Naive thymus-derived CD4-positive, alpha-beta T cell (primary cell): ENCODE measurements at regions of chr9 and their contacts with region 1.

Region 1: DNA sequence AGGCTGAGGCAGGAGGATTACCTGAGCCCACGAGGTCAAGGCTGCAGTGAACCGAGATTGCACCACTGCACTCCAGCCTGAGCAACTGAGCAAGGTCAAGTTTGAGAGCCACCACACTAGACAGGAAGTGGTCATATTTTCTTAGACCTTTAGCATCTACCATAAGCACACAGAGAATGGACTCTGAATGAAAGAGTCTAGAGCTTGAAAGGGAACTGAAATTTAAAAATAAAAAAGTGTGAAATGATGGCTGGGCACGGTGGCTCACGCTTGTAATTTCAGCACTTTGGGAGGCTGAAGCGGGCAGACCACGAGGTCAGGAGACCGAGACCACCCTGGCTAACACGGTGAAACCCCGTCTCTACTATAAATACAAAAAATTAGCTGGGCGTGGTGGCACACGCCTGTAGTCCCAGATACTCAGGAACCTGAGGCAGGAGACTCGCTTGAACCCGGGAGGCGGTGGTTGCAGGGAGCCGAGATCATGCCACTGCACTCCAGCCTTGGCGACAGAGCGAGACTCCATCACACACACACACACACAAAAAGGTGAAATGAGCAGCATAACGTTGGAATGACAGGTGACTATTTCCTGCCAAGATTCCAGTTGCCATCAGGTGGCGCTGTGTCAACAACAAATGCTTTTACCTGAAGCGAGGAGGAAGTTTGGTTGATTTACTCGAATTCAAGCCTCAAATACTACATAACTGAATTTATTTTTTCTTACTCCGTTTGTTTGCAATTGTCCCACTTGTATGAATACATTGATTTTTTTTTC is 21.3 kb upstream of the AK3 start:
- DNase-seq: peak; percentile 56 to 83 (median 76)
- ATAC-seq: peak; percentile 79
- H3K4me3 ChIP-seq: no peak overlapping the region
- H3K4me3 Mint-ChIP-seq: peak overlapping the region; percentile 39 to 79 (median 64)
- H3K27ac ChIP-seq: no peak overlapping the region
- H3K27ac Mint-ChIP-seq: peak overlapping the region in 5 of 9 donors; percentile 29 to 83 (median 51)
- H3K4me1 ChIP-seq: peaks cover 0 to 3% of the 10 kb centered on the region in 2 donors
- H3K4me1 Mint-ChIP-seq: peaks cover 0 to 20% (median 10%) of the 10 kb centered on the region in 7 donors
- H3K27me3 ChIP-seq: no peaks in the 10 kb centered on the region
- H3K27me3 Mint-ChIP-seq: peaks cover 0 to 11% (median 7%) of the 10 kb centered on the region in 5 donors

Region 2: GRCh38 chr9:4832786-4833579 is 70.7 kb after region 1 on chr9:
- CTCF ChIA-PET with region 1: interaction called, 5 read pairs
- POLR2A ChIA-PET with region 1: no interaction called
- intact Hi-C with region 1: loop called in 1 of 2 experiments (anchors 10 kb)
- DNase-seq: peak in 1 of 9 donors; percentile 56
- ATAC-seq: no peak
- H3K4me3 ChIP-seq: no peak overlapping the region
- H3K4me3 Mint-ChIP-seq: no peak overlapping the region
- H3K27ac ChIP-seq: no peak overlapping the region
- H3K27ac Mint-ChIP-seq: peak overlapping the region in 2 of 9 donors; percentile 37 to 80
- H3K4me1 ChIP-seq: no peaks in the 10 kb centered on the region
- H3K4me1 Mint-ChIP-seq: peaks cover 0 to 46% (median 9%) of the 10 kb centered on the region in 7 donors
- H3K27me3 ChIP-seq: no peaks in the 10 kb centered on the region
- H3K27me3 Mint-ChIP-seq: no peaks in the 10 kb centered on the region

Region 3: DNA sequence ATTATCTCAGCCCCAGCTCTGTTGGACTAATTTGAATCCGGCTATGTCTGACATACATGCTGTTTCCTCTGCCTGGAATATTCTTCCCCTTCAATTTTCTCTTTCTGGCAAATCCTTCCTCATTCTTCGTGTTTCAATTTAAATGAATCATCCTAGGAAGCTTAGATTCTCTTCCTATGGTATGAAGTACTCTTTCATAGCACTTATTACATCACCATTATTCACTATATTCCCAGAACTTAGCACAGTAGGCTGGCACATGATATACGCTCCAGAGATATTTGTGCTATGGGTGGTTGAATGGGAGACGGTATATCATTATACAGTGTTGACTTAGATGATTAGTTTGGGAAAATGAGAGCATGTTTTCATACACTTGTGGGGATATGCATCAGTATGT is 131.8 kb after region 1 on chr9:
- CTCF ChIA-PET with region 1: no interaction called
- POLR2A ChIA-PET with region 1: no interaction called
- intact Hi-C with region 1: no loop called
- DNase-seq: no peak
- ATAC-seq: no peak
- H3K4me3 ChIP-seq: no peak overlapping the region
- H3K4me3 Mint-ChIP-seq: no peak overlapping the region
- H3K27ac ChIP-seq: no peak overlapping the region
- H3K27ac Mint-ChIP-seq: no peak overlapping the region
- H3K4me1 ChIP-seq: no peaks in the 10 kb centered on the region
- H3K4me1 Mint-ChIP-seq: peaks cover 0 to 12% (median 0%) of the 10 kb centered on the region in 7 donors
- H3K27me3 ChIP-seq: no peaks in the 10 kb centered on the region
- H3K27me3 Mint-ChIP-seq: no peaks in the 10 kb centered on the region

Region 4: DNA sequence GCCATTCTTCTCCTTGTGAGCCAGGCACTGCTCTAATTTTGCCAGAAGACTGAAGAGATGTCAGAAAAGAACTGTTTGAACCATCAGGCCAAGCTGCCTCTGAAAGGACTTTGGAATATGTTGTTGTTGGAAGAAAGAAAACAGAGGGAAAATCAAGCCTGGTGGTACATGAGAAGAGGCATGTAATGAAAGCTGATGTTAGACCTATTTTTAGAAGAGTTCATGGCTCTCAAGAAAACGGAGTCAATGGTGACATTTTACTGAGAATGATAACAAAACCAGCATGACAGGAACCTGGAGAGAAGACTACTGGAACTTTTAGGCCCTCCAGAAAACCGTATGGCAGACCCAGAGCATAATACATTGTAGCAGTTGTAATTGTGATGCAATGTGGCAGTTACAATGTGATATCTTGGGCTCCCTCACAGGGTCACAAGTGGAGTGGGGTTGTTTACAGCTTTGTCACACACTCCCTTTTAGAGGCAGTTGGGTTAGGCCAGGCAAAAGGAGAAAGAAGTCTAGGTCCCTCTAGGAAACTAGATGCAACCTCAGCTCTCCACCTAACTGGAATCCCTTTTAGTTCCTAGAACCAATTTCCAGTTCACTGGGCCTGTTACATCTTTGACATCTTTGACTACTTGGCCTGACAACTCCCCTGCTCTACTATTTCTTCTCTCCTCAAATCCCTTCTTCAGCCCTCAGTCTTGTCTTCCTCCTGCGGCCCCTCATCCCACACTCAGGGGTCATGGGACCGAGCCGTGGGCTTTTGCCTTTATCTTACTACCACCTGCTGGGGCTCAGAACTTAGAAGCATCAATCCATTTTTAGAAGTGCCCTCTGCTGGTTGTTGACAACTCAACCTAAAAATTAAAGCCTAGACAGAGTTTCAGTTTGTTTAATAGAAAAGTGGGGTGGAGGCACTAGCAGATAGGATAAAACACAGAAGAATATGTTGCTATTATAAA is 161.6 kb after region 1 on chr9:
- CTCF ChIA-PET with region 1: interaction called, 11 read pairs
- POLR2A ChIA-PET with region 1: no interaction called
- intact Hi-C with region 1: loop called (anchors 1 kb)
- DNase-seq: peak in 5 of 9 donors; percentile 27 to 41 (median 31)
- ATAC-seq: peak; percentile 71
- H3K4me3 ChIP-seq: no peak overlapping the region
- H3K4me3 Mint-ChIP-seq: no peak overlapping the region
- H3K27ac ChIP-seq: no peak overlapping the region
- H3K27ac Mint-ChIP-seq: peak overlapping the region in 3 of 9 donors; percentile 12 to 76 (median 62)
- H3K4me1 ChIP-seq: no peaks in the 10 kb centered on the region
- H3K4me1 Mint-ChIP-seq: peaks cover 0 to 32% (median 4%) of the 10 kb centered on the region in 7 donors
- H3K27me3 ChIP-seq: no peaks in the 10 kb centered on the region
- H3K27me3 Mint-ChIP-seq: no peaks in the 10 kb centered on the region

Region 5: DNA sequence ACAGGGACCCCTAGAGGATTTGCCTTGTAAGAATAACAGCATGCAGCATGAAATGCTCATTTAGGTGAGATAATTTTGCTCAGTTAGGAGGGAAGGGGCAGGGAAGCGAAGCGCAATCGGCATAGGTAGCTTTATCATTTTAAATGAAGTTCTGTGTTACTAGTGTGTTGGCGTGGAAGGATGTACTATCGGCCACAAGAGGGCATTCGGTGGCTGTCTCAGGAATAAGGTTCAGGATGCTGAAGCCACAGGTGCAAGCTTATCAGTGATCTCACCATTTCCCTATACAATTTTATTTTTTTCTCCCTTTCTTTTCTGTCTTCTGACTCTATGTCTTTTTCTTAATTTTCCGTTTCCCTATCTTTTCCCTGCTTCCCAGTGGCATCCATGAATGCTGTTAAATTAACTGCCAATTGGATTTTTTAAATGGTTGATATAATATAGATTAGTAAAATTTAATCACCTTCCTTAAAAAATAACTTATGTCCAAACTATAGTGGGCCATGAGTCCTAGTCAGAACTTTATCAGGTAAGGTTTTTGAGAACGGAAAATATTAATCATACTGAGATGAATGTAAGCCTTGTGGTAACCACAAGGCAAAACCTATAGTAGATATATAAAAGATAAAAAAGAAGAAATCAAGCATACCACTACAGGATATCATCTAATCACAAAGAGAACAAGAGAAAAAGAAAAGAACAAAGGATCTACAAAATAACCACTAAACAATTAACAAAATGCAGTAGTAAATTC is 424.3 kb after region 1 on chr9:
- CTCF ChIA-PET with region 1: interaction called, 3 read pairs
- POLR2A ChIA-PET with region 1: no interaction called
- intact Hi-C with region 1: loop called (anchors 1 to 2 kb)
- DNase-seq: peak in 7 of 9 donors; percentile 51 to 74 (median 63)
- ATAC-seq: peak; percentile 92
- H3K4me3 ChIP-seq: no peak overlapping the region
- H3K4me3 Mint-ChIP-seq: peak overlapping the region in 1 of 10 donors; percentile 13
- H3K27ac ChIP-seq: no peak overlapping the region
- H3K27ac Mint-ChIP-seq: no peak overlapping the region
- H3K4me1 ChIP-seq: no peaks in the 10 kb centered on the region
- H3K4me1 Mint-ChIP-seq: peaks cover 5 to 15% (median 10%) of the 10 kb centered on the region in 7 donors
- H3K27me3 ChIP-seq: no peaks in the 10 kb centered on the region
- H3K27me3 Mint-ChIP-seq: peaks cover 0 to 5% (median 0%) of the 10 kb centered on the region in 5 donors

Region 6: DNA sequence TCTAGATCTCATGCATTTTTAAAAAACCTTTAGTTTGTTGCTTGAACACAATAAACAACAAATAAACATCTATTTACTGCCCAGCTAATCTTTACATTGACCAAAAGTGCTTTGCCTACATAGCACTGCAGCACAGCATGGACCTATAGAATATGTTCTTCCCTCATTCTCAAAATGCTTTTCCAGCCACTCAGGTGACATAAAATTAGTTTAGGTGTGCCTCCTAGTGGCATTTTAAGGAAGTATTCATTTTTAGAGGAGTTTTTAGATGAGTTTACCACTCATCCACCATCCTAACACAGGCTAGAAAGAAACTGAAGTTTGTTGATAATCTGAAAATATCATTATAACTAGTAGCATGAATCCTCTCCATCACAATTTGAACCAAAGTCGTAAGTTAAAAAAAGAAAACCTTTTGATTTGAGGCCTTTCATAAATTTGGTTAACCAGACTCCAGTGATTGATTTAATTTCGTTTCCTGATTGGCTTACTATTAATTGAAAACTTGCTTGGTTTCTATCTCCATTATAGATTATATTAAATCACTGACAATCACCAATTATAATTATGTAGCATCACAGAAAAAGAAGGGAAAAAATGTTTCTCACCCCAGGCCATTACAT is 662.8 kb after region 1 on chr9:
- CTCF ChIA-PET with region 1: interaction called, 3 read pairs
- POLR2A ChIA-PET with region 1: no interaction called
- intact Hi-C with region 1: loop called (anchors 1 kb)
- DNase-seq: peak in 6 of 9 donors; percentile 20 to 54 (median 43)
- ATAC-seq: peak; percentile 68
- H3K4me3 ChIP-seq: no peak overlapping the region
- H3K4me3 Mint-ChIP-seq: no peak overlapping the region
- H3K27ac ChIP-seq: no peak overlapping the region
- H3K27ac Mint-ChIP-seq: no peak overlapping the region
- H3K4me1 ChIP-seq: no peaks in the 10 kb centered on the region
- H3K4me1 Mint-ChIP-seq: peaks cover 0 to 15% (median 6%) of the 10 kb centered on the region in 7 donors
- H3K27me3 ChIP-seq: no peaks in the 10 kb centered on the region
- H3K27me3 Mint-ChIP-seq: no peaks in the 10 kb centered on the region